Activated CD4-positive, alpha-beta memory T cell treated with anti-CD3 and anti-CD28 coated beads for 36 hours (primary cell): ENCODE measurements at regions of chr18 and their contacts with region 1.

Region 1: DNA sequence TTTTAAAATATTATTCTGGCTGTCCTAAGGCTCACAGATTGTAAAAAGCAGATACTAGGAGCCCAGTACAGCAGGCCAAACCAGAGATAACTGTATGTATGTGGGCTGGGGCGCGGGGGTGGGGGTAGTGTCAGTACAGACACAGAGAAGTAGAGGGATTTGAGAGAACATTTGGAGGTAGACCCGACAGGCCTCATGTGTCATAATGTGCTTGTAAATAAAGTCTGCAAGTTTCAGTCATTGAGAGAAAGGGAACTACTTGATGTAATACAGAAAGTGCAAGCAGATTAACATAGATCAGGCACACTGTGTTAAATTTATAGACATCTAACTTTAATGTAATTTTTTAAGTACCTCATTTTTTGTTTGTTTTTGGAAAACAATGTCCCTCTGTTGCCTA is 7.4 kb upstream of the POLI start:
- DNase-seq: peak; percentile 83
- H3K4me3 Mint-ChIP-seq: no peak overlapping the region
- H3K27ac Mint-ChIP-seq: peak overlapping the region; percentile 79
- H3K4me1 Mint-ChIP-seq: peaks cover 52% of the 10 kb centered on the region
- H3K27me3 Mint-ChIP-seq: no peaks in the 10 kb centered on the region

Region 2: GRCh38 chr18:54086046-54086802 is 175.7 kb before region 1 on chr18:
- CTCF ChIA-PET with region 1: no interaction called
- POLR2A ChIA-PET with region 1: no interaction called
- intact Hi-C with region 1: loop called (anchors 2 kb)
- DNase-seq: peak; percentile 41
- H3K4me3 Mint-ChIP-seq: no peak overlapping the region
- H3K27ac Mint-ChIP-seq: peak overlapping the region; percentile 55
- H3K4me1 Mint-ChIP-seq: peaks cover 17% of the 10 kb centered on the region
- H3K27me3 Mint-ChIP-seq: no peaks in the 10 kb centered on the region

Region 3: GRCh38 chr18:54163453-54163852 is 98.4 kb before region 1 on chr18:
- CTCF ChIA-PET with region 1: no interaction called
- POLR2A ChIA-PET with region 1: no interaction called
- intact Hi-C with region 1: loop called (anchors 1 kb)
- DNase-seq: no peak
- H3K4me3 Mint-ChIP-seq: no peak overlapping the region
- H3K27ac Mint-ChIP-seq: peak overlapping the region; percentile 85
- H3K4me1 Mint-ChIP-seq: peaks cover 22% of the 10 kb centered on the region
- H3K27me3 Mint-ChIP-seq: no peaks in the 10 kb centered on the region

Region 4: DNA sequence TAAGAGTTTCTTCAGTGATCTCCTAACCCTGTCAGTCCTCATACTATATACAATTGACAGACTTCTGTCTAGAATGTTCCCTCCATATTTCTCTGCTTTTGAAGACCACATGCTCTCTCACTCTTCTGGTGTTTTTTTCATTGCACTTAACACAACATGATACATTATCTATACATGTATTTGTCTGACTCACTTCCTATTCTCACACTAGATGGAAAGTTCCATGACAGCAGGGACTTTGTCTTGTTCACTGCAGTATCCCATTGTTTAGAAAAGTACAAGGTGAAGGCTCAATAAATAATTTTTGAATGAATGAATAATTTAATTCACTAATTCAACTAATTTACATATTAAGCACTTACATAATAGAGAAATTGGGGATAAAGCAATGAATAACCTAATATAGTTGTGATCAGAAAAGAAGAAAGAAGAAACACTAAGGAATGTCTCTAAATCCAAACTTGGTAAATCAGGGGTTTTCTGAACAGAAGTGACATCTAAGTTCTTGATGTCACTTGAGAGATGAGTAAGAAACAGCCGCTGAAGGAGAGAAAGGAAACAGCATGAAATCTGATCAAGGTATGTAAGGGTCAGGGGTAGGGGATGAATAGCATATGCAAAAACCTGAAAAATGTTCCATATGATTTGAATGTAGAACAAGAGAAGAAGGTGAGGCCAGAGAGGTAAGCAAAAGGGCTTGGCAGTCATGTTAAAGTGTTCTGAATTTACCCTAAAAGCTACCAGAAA is 79.9 kb before region 1 on chr18:
- CTCF ChIA-PET with region 1: no interaction called
- POLR2A ChIA-PET with region 1: no interaction called
- intact Hi-C with region 1: loop called (anchors 1 kb)
- DNase-seq: no peak
- H3K4me3 Mint-ChIP-seq: no peak overlapping the region
- H3K27ac Mint-ChIP-seq: no peak overlapping the region
- H3K4me1 Mint-ChIP-seq: peaks cover 3% of the 10 kb centered on the region
- H3K27me3 Mint-ChIP-seq: no peaks in the 10 kb centered on the region

Region 5: DNA sequence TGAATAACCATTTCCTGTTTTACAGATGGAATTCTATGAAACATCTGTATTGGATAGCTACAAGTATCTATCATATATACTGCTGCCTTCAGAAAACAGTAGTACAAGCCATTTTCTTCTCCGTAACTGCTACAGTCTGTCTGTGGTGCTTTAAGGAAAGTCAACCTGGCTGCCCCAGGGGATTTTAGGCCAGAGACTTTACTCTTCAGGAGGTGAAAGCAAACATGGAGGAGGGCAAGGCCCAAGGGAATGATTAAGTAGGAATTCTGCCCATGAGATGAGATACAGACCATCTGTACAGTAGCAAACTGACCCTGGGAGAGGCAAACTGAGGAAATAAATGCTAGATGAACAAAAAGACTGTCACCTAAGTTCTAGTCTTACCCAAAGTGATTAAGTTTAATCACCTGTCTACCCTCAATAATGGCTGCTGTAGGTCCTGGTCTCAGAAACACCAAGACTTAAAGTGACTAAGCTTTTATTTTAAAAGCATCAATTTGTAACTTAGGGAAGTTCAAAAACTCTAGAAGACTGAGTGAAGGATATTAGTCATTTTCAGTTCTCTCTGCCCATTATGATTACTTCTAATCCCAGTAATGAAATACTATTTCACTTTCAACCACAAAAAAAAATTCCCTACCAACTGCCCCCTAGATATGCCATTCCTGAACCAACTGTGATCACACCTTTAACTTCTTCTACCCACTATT is 52.3 kb before region 1 on chr18:
- CTCF ChIA-PET with region 1: no interaction called
- POLR2A ChIA-PET with region 1: no interaction called
- intact Hi-C with region 1: loop called (anchors 1 kb)
- DNase-seq: no peak
- H3K4me3 Mint-ChIP-seq: peak overlapping the region; percentile 17
- H3K27ac Mint-ChIP-seq: peak overlapping the region; percentile 83
- H3K4me1 Mint-ChIP-seq: peaks cover 62% of the 10 kb centered on the region
- H3K27me3 Mint-ChIP-seq: no peaks in the 10 kb centered on the region

Region 6: DNA sequence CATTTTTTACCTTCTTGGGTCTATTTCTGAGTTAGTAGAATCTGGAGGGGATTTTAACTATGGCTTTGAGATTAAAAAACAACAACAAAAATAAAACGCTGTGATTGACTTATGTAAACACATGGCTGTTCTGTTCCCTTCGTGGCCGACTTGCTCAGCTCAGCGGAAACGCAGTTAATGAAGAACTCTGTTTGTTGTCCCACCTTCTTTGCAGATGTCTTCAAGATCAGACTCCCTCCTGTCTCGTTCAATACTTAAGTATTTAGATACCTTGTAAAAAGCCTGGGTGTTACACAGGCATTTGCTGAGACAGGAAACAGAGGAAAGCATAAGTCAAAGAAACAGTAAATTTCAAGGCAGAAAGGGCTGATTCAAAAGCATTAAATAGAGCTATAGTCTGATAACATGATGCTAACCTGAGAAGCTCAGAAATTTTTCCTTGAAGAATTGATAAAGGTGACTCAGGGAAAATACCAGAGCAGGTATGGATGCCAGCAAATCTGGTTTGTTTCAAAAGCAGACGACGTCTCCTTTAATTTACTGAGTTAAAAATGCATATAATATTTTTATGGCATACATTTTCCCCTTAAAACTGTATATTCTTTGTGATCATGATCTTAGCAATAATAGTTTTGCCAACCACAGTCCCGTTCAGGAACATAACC is 14.3 kb before region 1 on chr18:
- CTCF ChIA-PET with region 1: interaction called, 4 read pairs
- POLR2A ChIA-PET with region 1: interaction called, 3 read pairs
- intact Hi-C with region 1: loop called (anchors 1 kb)
- DNase-seq: no peak
- H3K4me3 Mint-ChIP-seq: no peak overlapping the region
- H3K27ac Mint-ChIP-seq: peak overlapping the region; percentile 45
- H3K4me1 Mint-ChIP-seq: peaks cover 24% of the 10 kb centered on the region
- H3K27me3 Mint-ChIP-seq: peaks cover 2% of the 10 kb centered on the region

Region 7: GRCh38 chr18:54712306-54712705 is 450.4 kb after region 1 on chr18:
- CTCF ChIA-PET with region 1: no interaction called
- POLR2A ChIA-PET with region 1: no interaction called
- intact Hi-C with region 1: loop called (anchors 5 kb)
- DNase-seq: peak; percentile 40
- H3K4me3 Mint-ChIP-seq: no peak overlapping the region
- H3K27ac Mint-ChIP-seq: no peak overlapping the region
- H3K4me1 Mint-ChIP-seq: peaks cover 29% of the 10 kb centered on the region
- H3K27me3 Mint-ChIP-seq: peaks cover 5% of the 10 kb centered on the region